ENCODE measurements at regions of chr15 and their contacts with region 1.

Region 1: GRCh38 chr15:94269954-94270353 is 38.6 kb downstream of the MCTP2 start:
- DNase-seq: no peak
- H3K4me3 ChIP-seq: no peak overlapping the region
- H3K27ac ChIP-seq: no peak overlapping the region
- H3K4me1 ChIP-seq: peaks cover 27 to 59% (median 46%) of the 10 kb centered on the region in 4 experiments
- H3K27me3 ChIP-seq: no peaks in the 10 kb centered on the region

Region 2: GRCh38 chr15:94282269-94283250 is 12.6 kb after region 1 on chr15:
- CTCF ChIA-PET with region 1: interaction called, 11 read pairs
- POLR2A ChIA-PET with region 1: interaction called, 3 read pairs
- DNase-seq: no peak
- H3K4me3 ChIP-seq: no peak overlapping the region
- H3K27ac ChIP-seq: no peak overlapping the region
- H3K4me1 ChIP-seq: peaks cover 29 to 46% (median 33%) of the 10 kb centered on the region in 4 experiments
- H3K27me3 ChIP-seq: no peaks in the 10 kb centered on the region

Measured in common myeloid progenitor, CD34-positive (primary cell).